GM23248 (cell line): ENCODE measurements at regions of chr3 and their contacts with region 1.

Region 1: GRCh38 chr3:69306239-69307185 is 79.4 kb downstream of the FRMD4B start:
- DNase-seq: peak; percentile 90
- H3K4me3 ChIP-seq: no peak overlapping the region
- H3K27ac ChIP-seq: no peak overlapping the region
- H3K4me1 ChIP-seq: no peaks in the 10 kb centered on the region
- H3K27me3 ChIP-seq: no peaks in the 10 kb centered on the region

Region 2: DNA sequence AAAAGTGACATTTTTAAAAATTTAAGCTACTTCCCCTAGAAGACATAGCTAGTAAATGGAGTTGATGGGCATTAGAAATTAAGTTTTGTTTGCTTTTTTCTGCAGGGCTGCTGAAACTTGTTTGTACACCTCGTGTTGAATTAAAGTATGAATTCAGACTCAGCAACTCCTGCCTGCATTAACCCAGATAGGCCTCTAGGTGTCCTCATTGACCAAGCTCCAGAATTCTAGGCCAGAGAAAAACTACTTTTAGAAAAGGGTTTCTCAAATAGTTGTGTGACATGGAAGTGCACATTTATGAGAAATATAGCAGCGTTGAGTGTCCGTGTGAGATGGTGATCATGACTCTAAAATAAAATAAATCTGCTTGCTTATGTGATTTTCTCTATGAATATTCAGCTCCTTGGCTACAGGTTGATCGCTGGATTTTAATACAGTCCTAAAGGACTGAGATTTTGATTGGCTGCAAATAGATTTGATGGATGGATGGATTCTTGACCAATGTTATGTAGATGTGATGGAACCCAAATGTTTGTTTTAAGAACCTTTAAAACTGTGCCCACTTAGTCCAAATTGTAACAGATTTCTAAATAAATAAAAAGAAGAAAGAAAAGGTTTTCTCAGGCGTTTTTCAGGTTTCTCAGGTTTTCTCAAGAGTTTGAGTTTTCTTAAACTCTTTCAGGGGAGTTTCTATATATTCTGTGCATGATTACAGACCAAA is 144.8 kb before region 1 on chr3:
- in situ Hi-C with region 1: loop called (anchors 5 kb)
- DNase-seq: peak; percentile 69
- H3K4me3 ChIP-seq: no peak overlapping the region
- H3K27ac ChIP-seq: no peak overlapping the region
- H3K4me1 ChIP-seq: no peaks in the 10 kb centered on the region
- H3K27me3 ChIP-seq: peaks cover 9% of the 10 kb centered on the region